H1 (cell line): ENCODE measurements at regions of chr2 and their contacts with region 1.

Region 1: GRCh38 chr2:127197475-127198385 is 22.4 kb downstream of the CYP27C1 start:
- DNase-seq: peak in 1 of 2 experiments; percentile 86
- H3K4me3 ChIP-seq: no peak overlapping the region
- H3K27ac ChIP-seq: no peak overlapping the region
- H3K4me1 ChIP-seq: peaks cover 0 to 16% (median 9%) of the 10 kb centered on the region in 4 experiments; a peak in 6 of 7 replicates
- H3K27me3 ChIP-seq: no peaks in the 10 kb centered on the region
- CTCF ChIP-seq: peak; percentile 69 to 93 (median 87)
- EP300 ChIP-seq: no peak
- POLR2A ChIP-seq: no peak
- RAD21 ChIP-seq: peak; percentile 83 to 91

Region 2: GRCh38 chr2:127106951-127107621 is 90.6 kb before region 1 on chr2 and contains the start of gene BIN1:
- CTCF ChIA-PET with region 1: no interaction called
- POLR2A ChIA-PET with region 1: no interaction called
- DNase-seq: peak; percentile 70 to 90
- H3K4me3 ChIP-seq: peak within 1 kb of the TSS; percentile 65 to 85 (median 72)
- H3K27ac ChIP-seq: no peak within 1 kb of the TSS
- H3K4me1 ChIP-seq: peaks cover 6 to 21% (median 13%) of the 10 kb centered on the region in 4 experiments
- H3K27me3 ChIP-seq: peaks cover 0 to 7% (median 0%) of the 10 kb centered on the region in 4 experiments; a peak in 1 of 7 replicates
- CTCF ChIP-seq: no peak
- EP300 ChIP-seq: no peak
- POLR2A ChIP-seq: peak in 1 of 2 experiments; percentile 36; a peak in 2 of 3 replicates
- RAD21 ChIP-seq: no peak
- total RNA-seq, gene BIN1: 35.6 and 41.9 TPM in 2 replicates

Region 3: GRCh38 chr2:127174136-127174535 is 23.6 kb before region 1 on chr2:
- CTCF ChIA-PET with region 1: interaction called, 11 read pairs
- POLR2A ChIA-PET with region 1: no interaction called
- DNase-seq: no peak
- H3K4me3 ChIP-seq: no peak overlapping the region
- H3K27ac ChIP-seq: no peak overlapping the region
- H3K4me1 ChIP-seq: peaks cover 0 to 4% (median 3%) of the 10 kb centered on the region in 4 experiments; a peak in 4 of 7 replicates
- H3K27me3 ChIP-seq: no peaks in the 10 kb centered on the region; a peak in 1 of 7 replicates
- CTCF ChIP-seq: peak; percentile 34 to 68 (median 54)
- EP300 ChIP-seq: no peak
- POLR2A ChIP-seq: no peak
- RAD21 ChIP-seq: peak; percentile 62 to 71

Region 4: DNA sequence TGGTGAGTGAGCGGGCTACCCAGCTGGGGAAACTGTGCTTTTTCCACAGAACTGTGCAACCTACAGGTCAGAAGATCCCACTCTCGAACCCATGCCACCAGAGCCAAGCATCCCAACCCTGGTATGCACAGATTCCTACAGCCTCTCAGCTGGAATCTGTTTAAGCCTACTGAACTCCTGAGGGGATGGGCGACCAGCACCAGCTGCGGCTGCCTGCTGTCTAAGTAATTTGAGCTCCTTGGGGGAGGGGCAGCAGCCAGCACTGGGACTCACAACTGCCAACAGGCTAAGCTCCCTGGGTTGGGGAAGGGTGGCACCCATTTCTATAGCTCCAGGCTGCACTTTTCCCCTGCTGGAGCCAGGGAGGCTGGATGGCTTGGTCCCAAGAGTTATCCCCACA is 10.6 kb after region 1 on chr2:
- CTCF ChIA-PET with region 1: interaction called, 17 read pairs
- POLR2A ChIA-PET with region 1: interaction called, 3 read pairs
- DNase-seq: peak in 1 of 2 experiments; percentile 66
- H3K4me3 ChIP-seq: peak overlapping the region in 2 of 4 experiments; percentile 7 to 20; a peak in 3 of 8 replicates
- H3K27ac ChIP-seq: no peak overlapping the region
- H3K4me1 ChIP-seq: peaks cover 6 to 21% (median 12%) of the 10 kb centered on the region in 4 experiments
- H3K27me3 ChIP-seq: no peaks in the 10 kb centered on the region
- CTCF ChIP-seq: no peak
- EP300 ChIP-seq: no peak
- POLR2A ChIP-seq: no peak
- RAD21 ChIP-seq: no peak

Region 5: DNA sequence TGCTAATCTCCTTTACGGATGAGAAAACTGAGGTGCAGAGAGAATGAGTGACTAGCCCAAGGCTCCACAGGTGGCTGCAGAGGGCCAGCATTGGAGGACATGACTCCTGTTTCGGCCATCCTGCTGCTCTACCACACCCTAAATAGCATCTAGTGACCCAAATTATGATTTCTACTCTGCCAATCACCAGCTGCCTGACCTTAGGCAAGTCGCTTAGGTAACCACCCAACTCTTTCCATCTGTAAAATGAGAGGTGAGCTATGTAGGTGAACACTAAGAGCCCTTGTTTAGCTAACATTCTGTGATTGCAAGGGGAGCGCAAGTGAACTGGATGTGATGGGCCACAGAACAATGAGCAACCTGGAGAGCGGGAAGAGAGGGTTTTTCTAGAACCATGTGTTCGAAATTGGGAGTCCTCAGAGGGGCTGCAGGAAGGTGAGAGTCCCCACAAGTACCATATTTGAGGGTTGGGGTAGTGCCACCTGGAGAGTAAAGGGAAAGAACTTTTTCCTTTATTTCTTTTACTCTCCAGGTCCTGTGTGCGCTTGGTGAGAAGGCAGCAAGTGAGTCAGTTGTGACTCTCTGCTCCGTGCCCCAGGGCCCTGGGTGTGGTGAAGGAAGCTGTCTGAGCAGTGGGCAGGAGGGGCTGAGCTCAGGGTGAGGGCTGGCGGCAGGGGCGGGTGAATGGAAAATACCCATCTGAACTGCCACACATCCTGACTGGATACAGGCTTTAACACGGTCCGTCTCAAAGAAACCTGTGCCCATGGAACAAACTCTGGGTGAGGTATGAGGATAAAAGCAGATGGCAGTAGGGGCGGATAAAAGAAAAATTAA is 20.0 kb after region 1 on chr2:
- CTCF ChIA-PET with region 1: interaction called, 13 read pairs
- POLR2A ChIA-PET with region 1: interaction called, 6 read pairs
- DNase-seq: no peak
- H3K4me3 ChIP-seq: peak overlapping the region in 3 of 4 experiments; percentile 7 to 97 (median 53); a peak in 3 of 8 replicates
- H3K27ac ChIP-seq: no peak overlapping the region
- H3K4me1 ChIP-seq: peaks cover 0 to 7% (median 4%) of the 10 kb centered on the region in 4 experiments; a peak in 5 of 7 replicates
- H3K27me3 ChIP-seq: peaks cover 0 to 17% (median 8%) of the 10 kb centered on the region in 4 experiments; a peak in 5 of 7 replicates
- CTCF ChIP-seq: no peak
- EP300 ChIP-seq: no peak
- POLR2A ChIP-seq: no peak
- RAD21 ChIP-seq: no peak

Region 6: GRCh38 chr2:127270636-127271035 is 72.9 kb after region 1 on chr2:
- CTCF ChIA-PET with region 1: interaction called, 13 read pairs
- POLR2A ChIA-PET with region 1: no interaction called
- DNase-seq: no peak
- H3K4me3 ChIP-seq: no peak overlapping the region
- H3K27ac ChIP-seq: no peak overlapping the region
- H3K4me1 ChIP-seq: no peaks in the 10 kb centered on the region
- H3K27me3 ChIP-seq: no peaks in the 10 kb centered on the region
- CTCF ChIP-seq: peak in 2 of 3 experiments; percentile 44 to 54; a peak in 2 of 4 replicates
- EP300 ChIP-seq: no peak
- POLR2A ChIP-seq: no peak
- RAD21 ChIP-seq: peak in 1 of 2 experiments; percentile 5; a peak in 1 of 4 replicates

Region 7: GRCh38 chr2:127279781-127280180 is 82.1 kb after region 1 on chr2:
- CTCF ChIA-PET with region 1: interaction called, 10 read pairs
- POLR2A ChIA-PET with region 1: no interaction called
- DNase-seq: no peak
- H3K4me3 ChIP-seq: no peak overlapping the region
- H3K27ac ChIP-seq: no peak overlapping the region
- H3K4me1 ChIP-seq: no peaks in the 10 kb centered on the region
- H3K27me3 ChIP-seq: no peaks in the 10 kb centered on the region
- CTCF ChIP-seq: no peak
- EP300 ChIP-seq: no peak
- POLR2A ChIP-seq: no peak
- RAD21 ChIP-seq: no peak